ENCODE measurements at regions of chr7 and their contacts with region 1.

Region 1: DNA sequence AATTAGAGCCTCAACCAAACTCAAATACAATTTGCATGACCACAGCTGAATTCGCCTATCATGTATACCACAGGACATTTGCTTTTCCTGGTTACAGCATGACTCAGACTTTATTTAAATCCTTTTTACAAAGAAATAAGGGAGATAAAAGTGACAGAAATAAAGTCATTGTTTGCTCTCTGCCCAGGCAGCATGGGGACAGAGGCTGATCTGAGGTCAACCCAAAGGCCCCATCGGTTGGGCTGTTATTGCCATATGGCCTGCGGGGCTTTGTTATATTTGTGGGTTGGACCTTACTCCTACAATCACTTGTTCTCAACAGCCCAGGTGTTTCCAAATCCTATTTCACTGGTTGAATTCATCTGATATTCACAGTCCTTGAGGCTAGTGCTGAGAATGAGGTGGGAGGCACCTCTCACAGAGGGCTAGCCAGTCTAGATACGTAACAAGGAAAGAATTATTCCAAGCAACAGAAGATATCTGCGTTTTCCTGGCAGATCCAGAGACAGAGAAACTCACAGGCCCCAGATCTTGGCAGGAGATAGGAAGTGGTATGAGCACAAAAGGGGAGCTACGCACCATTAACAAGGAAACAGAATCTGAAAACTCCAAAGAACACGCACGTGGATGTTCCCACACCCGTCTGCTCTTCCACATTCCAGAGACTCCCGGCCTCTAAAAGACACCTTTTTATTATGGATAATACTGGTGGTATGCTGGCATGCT is 117.3 kb downstream of the HIPK2 start:
- DNase-seq: no peak
- CTCF ChIP-seq: no peak

Region 2: DNA sequence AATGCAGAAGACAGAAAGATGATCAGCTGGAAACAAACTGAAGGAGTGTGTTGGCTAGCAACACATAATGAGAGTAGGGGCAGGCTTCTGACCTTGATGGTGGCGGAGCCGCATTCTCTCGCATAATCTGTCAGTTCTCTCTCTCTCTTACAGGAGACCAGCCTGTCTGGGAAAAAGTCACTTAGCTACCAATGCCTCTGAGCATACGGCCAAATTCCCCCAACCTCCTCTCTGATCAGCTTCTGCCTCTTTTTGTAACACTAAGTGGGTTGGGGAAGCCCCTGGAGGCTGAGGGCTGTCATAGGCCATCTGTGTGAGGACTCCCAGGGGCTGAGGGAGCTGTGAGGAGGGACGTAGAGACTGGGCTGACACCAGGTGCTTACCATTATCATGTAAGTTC is 12.8 kb after region 1 on chr7:
- CTCF ChIA-PET with region 1: interaction called, 17 read pairs
- POLR2A ChIA-PET with region 1: interaction called, 11 read pairs
- DNase-seq: peak; percentile 75
- CTCF ChIP-seq: no peak

Region 3: DNA sequence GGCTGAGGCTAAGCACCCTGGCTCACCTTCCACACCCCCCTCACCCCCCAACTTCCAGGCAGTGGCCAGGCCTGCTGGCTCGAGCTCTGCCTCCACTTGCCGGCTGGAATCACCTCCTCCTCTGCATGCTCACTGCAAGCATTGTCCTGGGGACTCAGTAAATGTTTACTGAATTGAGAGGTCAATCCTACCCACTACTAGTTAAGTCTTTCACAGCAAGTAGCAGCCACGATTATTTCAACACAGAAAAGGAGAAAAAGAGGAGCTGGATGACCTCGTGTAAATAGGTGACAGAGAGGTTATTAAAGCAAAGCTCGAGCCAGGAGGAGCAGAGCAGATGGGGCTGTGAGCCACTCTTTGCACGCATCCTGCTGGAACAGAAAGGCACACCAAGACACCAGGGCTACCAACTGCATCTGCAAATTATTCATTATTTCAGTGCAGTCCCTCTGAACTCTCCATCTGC is 85.2 kb after region 1 on chr7:
- CTCF ChIA-PET with region 1: no interaction called
- POLR2A ChIA-PET with region 1: no interaction called
- DNase-seq: no peak
- CTCF ChIP-seq: no peak

Region 4: DNA sequence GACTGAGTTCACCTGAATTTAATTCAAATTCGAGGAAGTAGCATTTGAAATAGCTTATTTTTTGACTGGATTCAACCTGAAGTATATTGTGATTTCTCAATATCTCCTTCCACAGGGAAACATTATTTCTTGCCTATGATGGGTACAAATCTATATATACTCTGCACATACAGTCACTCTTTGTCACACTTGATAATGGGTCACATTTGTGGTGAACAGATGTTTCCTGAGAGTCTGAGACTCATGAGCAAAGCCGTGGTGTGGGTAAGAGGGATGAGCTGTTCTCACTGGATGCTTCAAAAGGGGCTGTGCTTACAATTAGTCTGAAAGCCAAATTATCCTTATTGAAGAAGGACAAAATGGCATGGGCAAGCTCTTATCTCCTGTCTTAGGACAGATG is 150.6 kb after region 1 on chr7:
- CTCF ChIA-PET with region 1: no interaction called
- POLR2A ChIA-PET with region 1: no interaction called
- DNase-seq: no peak
- CTCF ChIP-seq: no peak

Region 5: GRCh38 chr7:139943401-139943800 is 282.9 kb after region 1 on chr7:
- CTCF ChIA-PET with region 1: no interaction called
- POLR2A ChIA-PET with region 1: no interaction called
- DNase-seq: no peak
- CTCF ChIP-seq: no peak